Mammary epithelial cell (primary cell): ENCODE measurements at regions of chr15 and their contacts with region 1.

Region 1: GRCh38 chr15:53506370-53506769 is 253.1 kb downstream of the WDR72 start:
- DNase-seq: no peak
- H3K4me3 ChIP-seq: no peak overlapping the region
- H3K27ac ChIP-seq: no peak overlapping the region
- H3K4me1 ChIP-seq: no peaks in the 10 kb centered on the region
- H3K27me3 ChIP-seq: no peaks in the 10 kb centered on the region
- CTCF ChIP-seq: no peak

Region 2: DNA sequence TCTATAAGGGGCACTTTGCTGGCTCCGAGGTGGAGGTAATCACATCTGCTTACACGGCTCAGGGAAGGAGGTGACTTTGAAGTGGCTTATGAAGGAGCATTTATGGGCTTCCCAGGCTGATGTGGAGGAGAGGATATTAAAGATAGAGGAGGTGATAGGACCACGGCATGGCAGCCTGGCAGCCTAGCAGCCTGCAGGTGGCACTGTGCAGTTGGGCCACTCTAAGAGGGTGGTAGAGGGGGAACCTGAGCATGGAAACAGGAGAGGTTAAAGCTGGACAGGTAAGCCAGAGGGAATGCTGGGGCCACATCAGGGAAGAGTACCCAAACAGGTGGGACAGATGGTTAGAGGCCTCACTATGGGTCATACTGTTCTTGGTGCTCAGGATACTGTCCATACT is 122.0 kb before region 1 on chr15:
- CTCF ChIA-PET with region 1: no interaction called
- dilution Hi-C with region 1: no loop called
- in situ Hi-C with region 1: no loop called
- intact Hi-C with region 1: no loop called
- DNase-seq: no peak
- H3K4me3 ChIP-seq: no peak overlapping the region
- H3K27ac ChIP-seq: no peak overlapping the region
- H3K4me1 ChIP-seq: no peaks in the 10 kb centered on the region
- H3K27me3 ChIP-seq: no peaks in the 10 kb centered on the region
- CTCF ChIP-seq: no peak

Region 3: DNA sequence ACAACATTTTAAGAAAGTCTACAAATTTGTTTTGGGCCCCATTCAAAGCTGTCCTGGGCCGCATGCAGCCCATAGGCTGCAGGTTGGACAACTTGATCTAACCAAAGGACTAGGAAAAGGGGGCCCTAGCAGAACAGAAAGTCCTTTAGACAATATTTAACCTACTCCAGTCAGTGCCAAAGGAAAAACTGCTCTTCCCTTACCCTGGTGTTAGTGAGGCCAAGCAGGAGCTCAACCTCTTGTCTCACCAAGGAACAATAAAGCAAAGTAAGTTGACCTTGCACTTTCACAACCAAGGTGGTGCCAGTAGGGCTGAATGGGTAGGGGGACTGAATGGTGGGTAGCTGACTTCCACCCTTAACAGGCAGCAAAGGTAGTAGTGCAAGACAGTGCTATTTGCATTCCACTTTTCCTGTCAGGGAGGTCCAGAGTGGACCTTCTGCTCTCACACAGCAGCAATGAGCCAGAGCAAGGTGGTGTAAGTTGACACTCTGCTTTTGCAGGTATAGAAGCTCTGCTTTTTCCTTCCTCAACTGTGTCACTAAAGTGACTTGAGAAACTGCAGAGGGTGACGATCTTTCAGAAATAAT is 128.2 kb after region 1 on chr15:
- CTCF ChIA-PET with region 1: interaction called, 14 read pairs
- dilution Hi-C with region 1: no loop called
- in situ Hi-C with region 1: no loop called
- intact Hi-C with region 1: no loop called
- DNase-seq: no peak
- H3K4me3 ChIP-seq: no peak overlapping the region
- H3K27ac ChIP-seq: no peak overlapping the region
- H3K4me1 ChIP-seq: no peaks in the 10 kb centered on the region
- H3K27me3 ChIP-seq: no peaks in the 10 kb centered on the region
- CTCF ChIP-seq: no peak